Activated T-helper 1 cell treated with anti-CD3 and anti-CD28 coated beads, Interleukin-12 subunit alpha, Interleukin-12 subunit beta, Interleukin-2, Interleukin-4 antibody, amounts not matched to agents 30 ng/mL and 10 ng/mL and 1 ng/mL, durations not matched to agents 14 hours and 24 hours and 36 hours (primary cell): ENCODE measurements at regions of chr9 and their contacts with region 1.

Region 1: GRCh38 chr9:22238809-22239684 is 207.6 kb upstream of the DMRTA1 start:
- DNase-seq: no peak
- H3K4me3 Mint-ChIP-seq: no peak overlapping the region
- H3K27ac Mint-ChIP-seq: no peak overlapping the region
- H3K4me1 Mint-ChIP-seq: peaks cover 50% of the 10 kb centered on the region
- H3K27me3 Mint-ChIP-seq: peaks cover 43% of the 10 kb centered on the region

Region 2: GRCh38 chr9:22175972-22176545 is 63.0 kb before region 1 on chr9:
- intact Hi-C with region 1: loop called (anchors 1 kb)
- DNase-seq: peak; percentile 5
- H3K4me3 Mint-ChIP-seq: peak overlapping the region; percentile 1
- H3K27ac Mint-ChIP-seq: peak overlapping the region; percentile 51
- H3K4me1 Mint-ChIP-seq: peaks cover 30% of the 10 kb centered on the region
- H3K27me3 Mint-ChIP-seq: peaks cover 10% of the 10 kb centered on the region

Region 3: GRCh38 chr9:22211593-22212360 is 27.3 kb before region 1 on chr9:
- intact Hi-C with region 1: loop called (anchors 2 kb)
- DNase-seq: no peak
- H3K4me3 Mint-ChIP-seq: no peak overlapping the region
- H3K27ac Mint-ChIP-seq: no peak overlapping the region
- H3K4me1 Mint-ChIP-seq: peaks cover 38% of the 10 kb centered on the region
- H3K27me3 Mint-ChIP-seq: peaks cover 21% of the 10 kb centered on the region